Esophagus squamous epithelium (tissue), 5 donors: ENCODE measurements at regions of chr16 and their contacts with region 1.

Region 1: GRCh38 chr16:68264128-68265077 is at the start of gene SLC7A6:
- DNase-seq: no peak
- H3K4me3 ChIP-seq: peak within 1 kb of the TSS; percentile 71 to 95 (median 81)
- H3K27ac ChIP-seq: peak within 1 kb of the TSS; percentile 92 to 99 (median 94)
- H3K4me1 ChIP-seq: peaks cover 15 to 54% (median 15%) of the 10 kb centered on the region in 3 donors
- H3K27me3 ChIP-seq: no peaks in the 10 kb centered on the region
- CTCF ChIP-seq: peak; percentile 41 to 68 (median 64)
- POLR2A ChIP-seq: peak in 2 of 4 donors; percentile 65 to 71
- total RNA-seq, gene SLC7A6: 5.7 to 28.2 (median 7.9) TPM

Region 2: GRCh38 chr16:68328151-68328859 is 63.9 kb after region 1 on chr16:
- intact Hi-C with region 1: loop called (anchors 2 kb)
- DNase-seq: no peak
- H3K4me3 ChIP-seq: no peak overlapping the region
- H3K27ac ChIP-seq: no peak overlapping the region
- H3K4me1 ChIP-seq: peaks cover 0 to 30% (median 11%) of the 10 kb centered on the region in 3 donors
- H3K27me3 ChIP-seq: no peaks in the 10 kb centered on the region
- CTCF ChIP-seq: peak; percentile 77 to 97 (median 94)
- POLR2A ChIP-seq: no peak